Posterior vena cava (tissue), 2 donors: ENCODE measurements at regions of chr11 and their contacts with region 1.

Region 1: DNA sequence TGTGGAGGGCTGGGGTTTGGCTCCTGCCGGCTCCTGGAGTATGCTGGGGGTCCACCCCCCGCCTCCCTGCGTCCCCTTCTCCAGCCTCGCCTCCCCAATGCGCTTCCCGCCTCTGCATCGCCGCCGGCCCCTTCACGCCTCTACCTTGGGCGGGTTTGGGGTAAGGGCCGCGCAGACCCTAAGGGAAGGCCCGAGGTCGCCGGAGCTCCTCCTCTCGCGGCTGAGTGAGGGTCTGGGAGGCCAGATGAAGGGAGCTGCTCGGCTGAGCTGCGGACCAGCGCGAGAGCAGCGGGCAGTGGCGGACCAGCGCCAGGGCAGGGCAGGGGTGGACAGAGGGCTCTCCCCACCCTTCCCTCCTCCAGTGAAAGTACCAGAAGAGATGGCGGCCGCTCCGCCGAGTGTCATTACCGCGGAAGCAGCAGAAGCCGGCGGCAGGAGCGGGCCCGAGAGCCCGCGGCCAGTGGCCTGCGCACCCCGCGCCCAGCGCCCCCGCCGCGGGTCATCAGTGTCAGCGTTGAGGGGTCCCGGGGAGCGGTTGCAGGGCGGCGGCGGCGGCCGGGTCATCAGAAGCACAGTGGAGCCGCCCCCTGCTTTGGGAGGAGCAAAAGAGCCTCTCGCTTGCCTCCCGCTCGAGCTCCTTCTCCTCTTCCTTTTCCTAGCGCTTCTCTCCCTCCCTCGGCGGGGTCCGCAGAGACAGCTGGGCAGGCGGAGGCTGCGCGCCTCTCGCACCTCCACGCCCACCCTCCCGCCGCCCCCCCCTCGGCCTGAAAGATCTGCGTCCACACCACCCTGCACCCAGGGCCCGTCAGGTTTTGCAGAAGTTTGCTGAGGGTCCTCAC is 255.6 kb upstream of the CADM1 start:
- DNase-seq: peak; percentile 84

Region 2: GRCh38 chr11:115518983-115519382 is 240.9 kb before region 1 on chr11:
- intact Hi-C with region 1: loop called in 1 of 2 experiments (anchors 10 kb)
- DNase-seq: no peak

Region 3: DNA sequence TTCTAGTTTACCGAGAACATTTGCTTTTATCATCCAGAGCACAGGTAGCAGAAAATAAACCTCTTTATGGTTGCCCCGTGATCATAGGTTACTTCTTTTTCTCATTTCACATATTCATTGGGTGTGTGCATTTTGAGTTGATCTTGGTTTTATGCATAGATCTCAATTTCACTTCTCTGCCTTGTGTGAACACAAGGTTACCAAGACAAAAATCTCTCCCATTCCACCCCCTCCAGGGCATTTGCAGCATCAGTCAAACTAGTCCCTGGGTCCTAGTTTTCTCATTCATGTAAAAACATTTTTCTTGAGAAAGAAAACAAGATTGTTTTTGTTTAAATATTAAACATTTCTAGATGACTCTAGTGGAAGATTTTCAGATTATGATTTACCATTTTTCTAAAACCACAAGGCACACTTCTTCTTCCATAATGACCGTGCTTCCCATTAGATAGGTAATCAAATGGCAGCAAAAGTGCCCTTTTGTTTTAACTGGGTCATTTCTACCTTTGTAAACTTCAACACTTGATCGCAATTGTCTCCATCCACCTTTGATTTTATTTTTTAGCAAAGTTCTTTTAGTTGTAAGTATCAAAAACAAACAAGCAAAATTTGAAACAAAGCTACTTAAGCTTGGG is 271.0 kb after region 1 on chr11:
- intact Hi-C with region 1: no loop called
- DNase-seq: no peak